ENCODE measurements at regions of chr7 and their contacts with region 1.

Region 1: DNA sequence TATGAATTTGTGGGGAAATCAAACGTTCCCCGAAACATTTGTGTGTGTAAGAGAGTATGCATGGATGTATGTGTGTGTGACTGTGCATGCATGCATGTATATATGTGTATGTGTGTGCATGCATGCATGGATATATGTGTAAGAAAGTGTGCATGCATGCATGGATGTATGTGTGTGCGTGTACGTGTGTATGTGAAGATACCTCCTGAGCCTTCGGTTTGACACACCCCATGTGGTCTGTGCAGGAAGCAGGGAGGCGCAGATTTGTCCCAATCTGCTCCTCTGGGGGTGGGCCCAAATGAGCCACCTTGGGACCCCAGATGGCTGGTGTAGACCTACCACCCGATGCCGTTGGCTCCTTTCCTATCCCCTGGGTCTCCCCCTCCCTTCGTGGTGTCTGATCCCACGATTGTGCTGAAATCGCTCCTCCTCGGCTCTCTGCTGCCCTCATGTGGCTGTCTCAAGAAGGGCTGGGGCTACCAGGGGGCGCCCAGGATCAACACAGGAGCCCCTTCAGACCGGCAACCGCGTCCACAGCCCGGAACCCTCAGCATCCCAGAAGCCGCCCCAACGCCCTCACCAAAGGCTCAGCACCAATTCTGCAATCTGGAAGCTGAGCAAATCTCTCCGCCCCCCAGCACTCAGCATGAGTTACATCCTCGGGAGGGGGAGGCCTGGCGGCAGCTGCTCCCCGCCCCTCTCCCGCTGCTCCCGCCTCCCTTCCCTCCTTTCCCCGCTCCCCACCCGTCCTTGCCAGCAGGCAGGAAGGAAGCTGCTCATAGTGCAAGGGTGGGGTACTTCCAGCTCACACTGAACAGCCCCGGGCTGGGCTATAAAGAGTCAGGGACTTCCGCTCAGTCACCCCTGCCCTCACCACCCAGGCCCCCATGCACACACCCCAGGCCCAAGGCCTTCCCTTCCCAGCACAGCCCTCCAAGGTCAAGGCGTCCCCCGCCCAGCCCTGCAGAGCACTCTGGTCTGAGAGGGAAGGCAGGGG is 2.3 kb upstream of the NOS3 start:
- DNase-seq: no peak
- H3K4me3 ChIP-seq: no peak overlapping the region
- H3K27ac ChIP-seq: no peak overlapping the region
- H3K4me1 ChIP-seq: no peaks in the 10 kb centered on the region
- H3K27me3 ChIP-seq: no peaks in the 10 kb centered on the region
- CTCF ChIP-seq: peak; percentile 67 to 72

Region 2: GRCh38 chr7:150778738-150779301 is 209.7 kb before region 1 on chr7:
- CTCF ChIA-PET with region 1: interaction called, 5 read pairs
- dilution Hi-C with region 1: no loop called
- in situ Hi-C with region 1: loop called (anchors 5 to 10 kb)
- intact Hi-C with region 1: loop called (anchors 1 kb)
- DNase-seq: peak; percentile 42
- H3K4me3 ChIP-seq: no peak overlapping the region
- H3K27ac ChIP-seq: no peak overlapping the region
- H3K4me1 ChIP-seq: no peaks in the 10 kb centered on the region
- H3K27me3 ChIP-seq: no peaks in the 10 kb centered on the region
- CTCF ChIP-seq: peak; percentile 86 to 92

Region 3: DNA sequence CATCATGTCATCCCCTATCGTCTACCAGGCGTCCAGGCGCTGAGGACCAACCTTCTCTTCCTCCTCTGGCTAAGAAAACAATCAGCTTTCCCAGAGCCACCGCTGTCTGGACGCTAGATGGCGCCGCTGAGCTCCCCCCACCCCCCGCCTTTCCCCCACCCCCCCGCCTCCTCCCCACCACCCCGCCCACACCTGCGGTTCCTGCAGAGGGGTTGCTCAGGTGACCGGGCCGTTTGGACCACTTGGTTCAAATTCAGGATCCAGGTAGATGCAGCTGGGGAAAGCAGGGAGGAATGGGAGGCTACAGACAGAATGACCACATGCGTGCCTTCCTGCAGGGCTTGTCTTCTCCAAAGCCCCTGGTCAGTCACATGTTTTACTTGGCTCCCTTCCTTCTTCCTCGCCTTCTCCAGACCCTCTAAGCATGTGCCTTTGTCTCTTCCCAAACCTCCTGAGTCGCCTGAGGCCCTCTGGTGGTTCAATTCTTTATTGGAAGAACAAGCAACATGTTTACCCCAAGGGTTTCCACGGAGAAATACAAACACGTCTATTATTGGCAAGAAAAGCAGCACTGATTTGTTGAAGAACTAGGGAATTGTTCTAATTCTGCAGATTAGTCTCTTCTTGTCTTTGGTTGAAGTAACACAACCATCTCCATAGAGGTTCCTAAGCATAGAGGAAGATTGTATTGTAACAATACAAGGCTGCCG is 111.6 kb before region 1 on chr7:
- CTCF ChIA-PET with region 1: no interaction called
- dilution Hi-C with region 1: no loop called
- in situ Hi-C with region 1: no loop called
- intact Hi-C with region 1: loop called (anchors 5 kb)
- DNase-seq: peak; percentile 69
- H3K4me3 ChIP-seq: no peak overlapping the region
- H3K27ac ChIP-seq: no peak overlapping the region
- H3K4me1 ChIP-seq: peaks cover 15% of the 10 kb centered on the region
- H3K27me3 ChIP-seq: no peaks in the 10 kb centered on the region
- CTCF ChIP-seq: peak; percentile 58 to 64

Region 4: GRCh38 chr7:150898475-150899011 is 90.0 kb before region 1 on chr7:
- CTCF ChIA-PET with region 1: no interaction called
- dilution Hi-C with region 1: no loop called
- in situ Hi-C with region 1: loop called (anchors 5 kb)
- intact Hi-C with region 1: loop called (anchors 1 kb)
- DNase-seq: peak; percentile 46
- H3K4me3 ChIP-seq: no peak overlapping the region
- H3K27ac ChIP-seq: no peak overlapping the region
- H3K4me1 ChIP-seq: peaks cover 8% of the 10 kb centered on the region
- H3K27me3 ChIP-seq: peaks cover 2% of the 10 kb centered on the region
- CTCF ChIP-seq: peak; percentile 86 to 91

Region 5: DNA sequence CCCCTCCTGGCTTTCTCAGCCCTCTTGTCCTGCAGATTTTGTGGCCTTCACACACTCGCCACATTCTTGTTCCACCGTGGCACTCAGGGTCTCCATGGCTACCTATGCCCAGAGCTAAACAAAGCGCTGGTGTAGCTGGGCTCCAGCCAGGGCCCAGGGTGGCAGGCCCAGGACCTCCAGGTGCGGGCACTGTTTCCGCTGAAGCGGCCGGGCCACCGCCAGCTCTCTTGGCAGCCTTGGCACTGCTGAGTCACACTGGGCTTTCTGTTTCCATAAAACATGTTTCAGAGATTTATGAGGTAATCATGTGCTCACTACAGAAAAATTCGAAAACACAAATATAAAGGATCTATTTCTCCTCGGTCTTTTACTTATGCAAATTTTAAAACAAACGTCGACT is 84.9 kb before region 1 on chr7:
- CTCF ChIA-PET with region 1: no interaction called
- dilution Hi-C with region 1: no loop called
- in situ Hi-C with region 1: loop called (anchors 5 kb)
- intact Hi-C with region 1: loop called (anchors 1 kb)
- DNase-seq: peak; percentile 77
- H3K4me3 ChIP-seq: no peak overlapping the region
- H3K27ac ChIP-seq: peak overlapping the region; percentile 8
- H3K4me1 ChIP-seq: peaks cover 12% of the 10 kb centered on the region
- H3K27me3 ChIP-seq: no peaks in the 10 kb centered on the region
- CTCF ChIP-seq: no peak

Region 6: GRCh38 chr7:150962553-150963399 is 25.8 kb before region 1 on chr7:
- CTCF ChIA-PET with region 1: interaction called, 3 read pairs
- dilution Hi-C with region 1: no loop called
- in situ Hi-C with region 1: no loop called
- intact Hi-C with region 1: loop called (anchors 1 kb)
- DNase-seq: no peak
- H3K4me3 ChIP-seq: no peak overlapping the region
- H3K27ac ChIP-seq: no peak overlapping the region
- H3K4me1 ChIP-seq: peaks cover 6% of the 10 kb centered on the region
- H3K27me3 ChIP-seq: peaks cover 3% of the 10 kb centered on the region
- CTCF ChIP-seq: peak; percentile 90 to 93

Region 7: GRCh38 chr7:151028131-151028947 is 39.8 kb after region 1 on chr7 and contains the start of gene ABCB8:
- CTCF ChIA-PET with region 1: no interaction called
- dilution Hi-C with region 1: no loop called
- in situ Hi-C with region 1: no loop called
- intact Hi-C with region 1: no loop called
- DNase-seq: peak; percentile 99
- H3K4me3 ChIP-seq: peak within 1 kb of the TSS; percentile 60 to 80 (median 73)
- H3K27ac ChIP-seq: peak within 1 kb of the TSS; percentile 93
- H3K4me1 ChIP-seq: peaks cover 29% of the 10 kb centered on the region
- H3K27me3 ChIP-seq: no peaks in the 10 kb centered on the region
- CTCF ChIP-seq: peak in 1 of 2 donors; percentile 61
- total RNA-seq, gene ABCB8: 29.8 to 57.2 TPM

Region 8: GRCh38 chr7:151608031-151608551 is 619.6 kb after region 1 on chr7:
- CTCF ChIA-PET with region 1: interaction called, 10 read pairs
- dilution Hi-C with region 1: no loop called
- in situ Hi-C with region 1: no loop called
- intact Hi-C with region 1: no loop called
- DNase-seq: peak; percentile 73
- H3K4me3 ChIP-seq: no peak overlapping the region
- H3K27ac ChIP-seq: peak overlapping the region; percentile 45
- H3K4me1 ChIP-seq: peaks cover 29% of the 10 kb centered on the region
- H3K27me3 ChIP-seq: no peaks in the 10 kb centered on the region
- CTCF ChIP-seq: peak in 1 of 2 donors; percentile 8